Cardiac septum (tissue), 1 donor: ENCODE measurements at regions of chr10 and their contacts with region 1.

Region 1: DNA sequence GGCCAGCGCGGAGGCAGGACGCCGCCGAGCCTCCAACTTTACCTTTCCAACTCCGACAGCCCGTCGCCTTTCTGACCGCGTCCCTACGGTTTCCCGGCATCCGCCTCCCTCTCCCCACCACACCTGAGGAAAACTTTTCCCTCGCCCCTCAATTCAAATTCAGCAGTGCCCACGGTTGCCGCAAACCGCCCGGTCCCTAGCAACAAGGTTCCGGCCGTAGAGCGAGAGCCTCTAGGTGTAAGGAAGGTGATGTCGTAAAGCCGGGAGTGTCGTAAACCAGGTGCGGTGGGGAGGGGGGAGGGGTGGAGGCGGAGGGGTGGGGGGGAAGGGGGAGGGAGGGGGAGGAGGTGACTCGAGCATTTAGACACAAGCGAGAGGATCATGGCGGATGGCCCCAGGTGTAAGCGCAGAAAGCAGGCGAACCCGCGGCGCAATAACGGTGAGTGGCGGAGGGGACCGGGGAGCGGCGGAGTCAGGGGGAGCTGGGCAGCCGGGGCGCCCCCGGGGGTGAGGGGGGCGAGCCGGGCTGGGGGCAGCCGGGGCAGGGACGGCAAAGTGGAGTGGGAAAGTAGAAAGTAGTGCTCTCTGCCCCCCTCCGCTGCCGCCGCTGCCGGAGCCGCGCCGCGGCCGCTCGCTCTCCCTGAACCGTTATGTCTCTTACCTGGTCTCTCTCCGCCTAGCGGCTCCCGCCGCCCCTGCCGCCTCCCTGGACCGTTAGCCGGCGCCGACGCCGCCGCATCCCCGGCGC is at the start of gene ZEB1:
- DNase-seq: peak; percentile 93
- total RNA-seq, gene ZEB1: 149 TPM

Region 2: DNA sequence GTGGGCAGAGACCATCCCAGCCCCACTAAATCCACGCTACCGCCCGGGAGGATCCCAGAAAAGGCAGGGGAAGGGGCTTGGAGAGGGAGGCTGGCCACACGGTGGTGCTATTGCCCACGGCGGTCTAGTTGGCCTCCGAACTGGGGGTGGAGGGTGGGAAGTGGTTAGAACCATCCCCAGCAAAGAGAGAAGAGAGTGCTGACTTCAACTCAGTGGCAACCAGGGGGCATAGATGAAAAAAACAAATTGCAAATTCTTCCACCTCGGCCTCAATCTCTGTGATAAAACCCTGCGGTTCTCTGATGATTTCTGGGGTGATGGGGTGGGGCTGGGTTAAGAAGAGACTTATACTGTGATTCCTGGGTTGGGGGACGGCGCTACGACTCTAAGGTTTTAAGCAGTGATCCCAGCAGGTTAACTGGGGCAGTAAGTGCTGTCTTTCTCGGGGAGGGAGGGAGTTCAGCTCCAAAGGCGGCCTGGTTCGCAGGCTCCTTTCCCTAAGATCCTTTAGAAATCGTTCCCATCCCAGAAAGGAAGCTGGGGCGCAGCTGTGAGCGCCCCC is 535.0 kb before region 1 on chr10:
- intact Hi-C with region 1: loop called (anchors 2 kb)
- DNase-seq: peak; percentile 95

Region 3: DNA sequence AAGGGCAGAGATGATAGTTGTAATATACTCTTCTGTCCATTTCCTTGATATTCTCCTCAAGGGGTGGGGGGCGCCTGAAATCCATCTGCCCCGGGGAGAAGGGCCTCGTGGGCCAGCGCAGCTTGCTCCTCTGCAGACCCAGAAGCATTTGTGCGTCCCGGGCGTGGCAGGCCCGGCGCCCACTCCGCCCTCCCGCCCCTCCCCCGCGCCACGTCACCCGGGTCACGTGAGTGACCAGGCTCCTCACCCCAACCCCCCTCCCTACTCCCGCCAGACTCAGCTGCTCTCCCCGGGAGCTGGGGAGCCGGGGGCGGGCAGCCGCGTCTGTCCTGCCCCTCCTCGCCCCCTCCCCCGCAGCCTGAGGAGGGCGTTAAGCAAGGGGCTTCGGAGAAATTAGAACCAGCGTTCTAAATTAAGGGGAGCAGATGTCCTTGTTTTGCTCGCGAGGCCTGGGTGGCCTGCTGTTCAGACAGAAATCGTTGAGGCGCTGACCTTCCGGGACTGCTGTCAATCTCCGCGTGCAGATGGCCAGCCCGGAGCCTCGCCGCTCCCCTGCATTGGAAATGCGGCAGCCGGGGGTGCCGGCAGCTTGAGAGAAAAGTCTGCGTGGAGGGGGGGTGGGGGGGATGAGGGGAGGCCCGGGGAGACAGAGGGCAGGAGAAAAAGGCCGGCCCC is 185.3 kb before region 1 on chr10:
- intact Hi-C with region 1: loop called (anchors 5 kb)
- DNase-seq: peak; percentile 93

Region 4: GRCh38 chr10:31393844-31394243 is 74.8 kb after region 1 on chr10:
- intact Hi-C with region 1: loop called (anchors 5 kb)
- DNase-seq: no peak

Region 5: GRCh38 chr10:31431021-31431420 is 112.0 kb after region 1 on chr10:
- intact Hi-C with region 1: no loop called
- DNase-seq: no peak

Region 6: DNA sequence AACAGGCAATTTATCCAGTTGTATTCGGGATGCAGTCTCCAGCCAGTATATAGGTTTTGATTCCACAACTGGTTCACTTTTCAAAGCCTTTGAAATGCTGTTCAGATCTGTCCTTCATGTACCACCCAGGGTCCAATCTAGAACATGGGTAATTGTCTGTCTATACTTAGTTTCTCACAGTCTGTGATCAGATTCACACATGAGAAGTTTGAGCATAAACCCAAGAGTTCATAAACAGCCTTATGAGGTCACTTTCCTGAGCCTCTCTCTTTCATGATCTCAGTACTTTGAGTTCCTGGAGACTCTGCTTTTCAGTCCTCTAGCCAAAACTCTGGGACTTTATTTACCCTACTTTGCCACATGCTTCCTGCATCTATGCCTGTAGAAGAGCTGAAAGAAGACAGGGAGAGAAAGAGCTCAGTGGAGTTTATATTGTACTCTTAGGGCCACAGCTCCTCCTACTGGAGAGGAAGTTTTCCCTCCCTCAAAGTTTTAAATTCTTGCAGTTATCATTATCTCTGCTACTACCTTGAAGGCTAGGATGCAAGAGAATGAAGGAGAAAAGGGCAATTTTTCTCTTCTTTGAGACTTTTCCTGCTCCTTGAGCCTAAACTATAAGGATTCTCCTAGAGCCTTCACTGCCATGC is 172.0 kb after region 1 on chr10:
- intact Hi-C with region 1: loop called (anchors 5 kb)
- DNase-seq: no peak

Region 7: DNA sequence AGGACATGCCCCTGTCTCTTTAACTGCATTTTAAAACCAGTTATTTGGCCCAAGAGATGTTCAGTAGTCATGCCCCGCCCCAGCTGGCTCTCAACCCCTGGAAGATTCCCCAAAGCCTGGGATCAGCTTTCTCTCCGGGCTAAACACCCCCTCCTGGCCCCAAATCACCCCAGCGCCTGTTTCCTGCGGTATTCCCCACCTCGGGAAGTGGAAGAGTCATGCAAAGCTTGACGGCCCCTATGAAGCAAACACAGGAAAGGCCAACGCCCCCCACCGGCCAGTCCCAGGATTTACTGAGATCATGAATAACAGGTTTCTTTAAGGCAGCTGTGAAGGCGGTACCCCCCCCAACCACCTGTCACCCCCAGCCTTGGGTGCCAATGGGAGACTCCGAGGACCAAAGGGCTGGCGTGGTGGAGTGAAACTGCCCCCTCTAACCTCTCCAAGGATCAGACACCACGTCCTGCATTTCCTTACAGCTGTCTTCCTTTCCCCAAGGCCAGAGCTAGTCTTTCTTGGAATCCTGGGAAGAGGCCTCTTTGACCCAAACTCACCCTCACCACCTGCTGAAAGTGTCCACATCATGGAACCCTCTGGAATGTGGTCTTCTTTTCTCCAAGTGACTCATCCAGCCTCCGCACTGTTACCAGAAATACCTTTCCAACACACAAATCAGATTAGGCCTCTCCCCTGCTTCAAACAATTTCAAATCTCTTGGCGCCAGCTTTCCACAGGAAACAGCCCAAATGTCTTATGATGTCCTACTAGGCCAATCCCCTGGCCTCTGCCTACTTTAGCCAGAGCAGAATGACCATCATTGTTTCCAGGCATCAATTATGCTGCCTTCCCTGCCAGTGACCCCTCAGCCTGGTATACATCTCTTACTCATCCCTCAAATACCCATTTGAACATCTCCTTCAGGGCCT is 301.5 kb after region 1 on chr10:
- intact Hi-C with region 1: loop called (anchors 5 kb)
- DNase-seq: peak; percentile 85

Region 8: GRCh38 chr10:31808258-31809218 is 489.5 kb after region 1 on chr10:
- intact Hi-C with region 1: loop called (anchors 5 kb)
- DNase-seq: no peak